Common myeloid progenitor, CD34-positive (primary cell): ENCODE measurements at regions of chr6 and their contacts with region 1.

Region 1: GRCh38 chr6:44431118-44431725 is 43.7 kb downstream of the CDC5L start:
- DNase-seq: peak; percentile 65 to 86 (median 80)
- H3K4me3 ChIP-seq: no peak overlapping the region
- H3K27ac ChIP-seq: no peak overlapping the region
- H3K4me1 ChIP-seq: no peaks in the 10 kb centered on the region
- H3K27me3 ChIP-seq: no peaks in the 10 kb centered on the region

Region 2: DNA sequence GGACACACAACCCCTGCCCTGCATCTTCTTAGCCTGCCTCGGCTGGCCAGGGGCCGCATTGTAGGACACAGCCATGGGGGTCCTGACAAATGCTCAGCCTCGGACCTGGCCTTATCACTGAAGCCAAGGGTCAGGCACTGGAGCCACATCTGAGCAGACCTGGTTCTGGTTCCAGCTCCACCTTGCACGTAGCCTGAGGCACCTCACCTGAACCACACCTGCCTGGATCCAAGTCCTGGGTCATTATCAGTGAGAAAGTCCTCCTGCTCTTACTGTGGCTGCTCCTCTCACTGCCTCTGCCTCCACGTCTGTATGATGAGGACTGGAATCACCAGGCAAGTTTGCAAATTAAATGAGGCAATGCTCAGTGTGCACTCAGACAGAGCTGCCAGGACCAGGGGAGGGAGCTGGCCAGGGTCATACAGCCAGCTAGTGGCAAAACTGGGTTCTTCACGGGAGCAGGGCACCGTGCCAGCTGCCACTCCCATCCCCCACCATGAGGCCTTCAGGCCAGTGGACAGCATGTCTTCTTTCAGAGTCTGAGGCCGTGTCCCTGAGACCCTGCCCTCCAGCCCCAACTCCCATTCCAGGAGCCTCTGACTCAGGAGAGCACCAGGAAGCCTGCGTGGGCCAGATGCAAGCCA is 344.2 kb before region 1 on chr6:
- CTCF ChIA-PET with region 1: no interaction called
- POLR2A ChIA-PET with region 1: no interaction called
- DNase-seq: no peak
- H3K4me3 ChIP-seq: no peak overlapping the region
- H3K27ac ChIP-seq: no peak overlapping the region
- H3K4me1 ChIP-seq: no peaks in the 10 kb centered on the region
- H3K27me3 ChIP-seq: no peaks in the 10 kb centered on the region

Region 3: DNA sequence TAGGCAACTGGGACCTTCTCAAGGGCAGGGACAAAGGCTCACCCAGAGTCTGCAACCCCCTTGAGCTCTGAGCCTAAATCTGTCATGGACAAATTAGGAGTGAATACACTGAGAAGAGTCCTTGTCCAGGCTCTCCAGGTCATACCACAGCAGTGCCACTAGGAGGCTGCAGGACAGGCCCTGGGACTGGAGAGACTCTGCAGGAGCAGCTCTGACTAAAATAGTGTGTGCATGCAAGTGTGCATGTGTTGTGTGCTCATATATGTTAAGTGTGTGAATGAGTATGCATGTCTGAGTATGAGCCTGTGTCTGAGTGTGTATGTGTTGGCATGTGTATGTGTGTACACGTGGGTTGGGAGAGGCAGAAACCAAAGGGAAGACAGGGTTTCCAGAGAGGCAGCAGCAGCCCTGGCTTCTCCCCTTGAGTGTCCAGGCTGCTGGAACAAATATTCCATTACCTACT is 331.1 kb before region 1 on chr6:
- CTCF ChIA-PET with region 1: no interaction called
- POLR2A ChIA-PET with region 1: no interaction called
- DNase-seq: peak; percentile 38 to 54 (median 51)
- H3K4me3 ChIP-seq: no peak overlapping the region
- H3K27ac ChIP-seq: no peak overlapping the region
- H3K4me1 ChIP-seq: peaks cover 0 to 9% (median under 1%) of the 10 kb centered on the region in 4 experiments
- H3K27me3 ChIP-seq: no peaks in the 10 kb centered on the region

Region 4: GRCh38 chr6:44446628-44447306 is 15.5 kb after region 1 on chr6:
- CTCF ChIA-PET with region 1: interaction called, 10 read pairs
- POLR2A ChIA-PET with region 1: no interaction called
- DNase-seq: no peak
- H3K4me3 ChIP-seq: no peak overlapping the region
- H3K27ac ChIP-seq: no peak overlapping the region
- H3K4me1 ChIP-seq: no peaks in the 10 kb centered on the region
- H3K27me3 ChIP-seq: no peaks in the 10 kb centered on the region

Region 5: DNA sequence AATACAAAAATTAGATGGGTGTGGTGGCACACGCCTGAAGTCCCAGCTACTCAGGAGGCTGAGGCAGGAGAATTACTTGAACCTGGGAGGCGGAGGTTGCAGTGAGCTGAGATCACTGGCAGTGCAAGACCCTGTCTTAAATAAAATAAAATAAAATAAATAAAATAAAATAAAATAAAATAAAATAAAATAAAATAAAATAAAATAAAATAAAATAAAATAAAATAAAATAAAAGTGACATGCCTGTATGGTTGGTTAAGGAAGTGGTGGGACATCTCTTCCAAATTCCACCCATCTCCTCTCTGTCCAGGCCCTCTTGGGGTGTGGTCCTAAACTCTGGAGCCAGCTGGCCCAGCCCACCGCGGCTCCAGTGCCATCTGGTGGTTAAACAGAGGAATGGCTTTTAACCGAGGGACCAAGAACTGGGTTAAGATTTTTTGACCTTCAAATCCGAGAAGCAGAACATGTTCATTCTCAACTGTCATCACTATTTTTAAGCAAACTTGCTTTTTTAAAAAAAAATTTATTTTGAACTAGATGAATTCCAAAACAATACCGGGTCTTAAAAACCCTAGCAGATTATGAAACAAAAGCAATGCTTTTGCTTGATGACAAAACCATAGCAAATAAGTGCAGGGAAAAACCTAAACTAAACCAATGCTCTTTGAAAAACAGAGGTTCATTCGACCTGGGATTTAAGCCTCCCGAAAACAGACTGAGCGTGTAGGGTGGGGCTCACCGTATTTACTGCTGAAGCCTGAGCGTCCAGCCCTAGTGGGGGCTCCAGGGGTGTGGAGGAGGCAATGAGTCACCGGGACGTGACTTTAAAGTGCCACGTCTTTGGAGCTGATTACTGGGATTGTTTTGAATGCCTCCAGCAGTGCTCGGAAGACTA is 25.1 kb after region 1 on chr6:
- CTCF ChIA-PET with region 1: interaction called, 164 read pairs
- POLR2A ChIA-PET with region 1: no interaction called
- DNase-seq: peak; percentile 49 to 65 (median 64)
- H3K4me3 ChIP-seq: no peak overlapping the region
- H3K27ac ChIP-seq: no peak overlapping the region
- H3K4me1 ChIP-seq: peaks cover 0 to 1% (median 0%) of the 10 kb centered on the region in 4 experiments
- H3K27me3 ChIP-seq: no peaks in the 10 kb centered on the region

Region 6: DNA sequence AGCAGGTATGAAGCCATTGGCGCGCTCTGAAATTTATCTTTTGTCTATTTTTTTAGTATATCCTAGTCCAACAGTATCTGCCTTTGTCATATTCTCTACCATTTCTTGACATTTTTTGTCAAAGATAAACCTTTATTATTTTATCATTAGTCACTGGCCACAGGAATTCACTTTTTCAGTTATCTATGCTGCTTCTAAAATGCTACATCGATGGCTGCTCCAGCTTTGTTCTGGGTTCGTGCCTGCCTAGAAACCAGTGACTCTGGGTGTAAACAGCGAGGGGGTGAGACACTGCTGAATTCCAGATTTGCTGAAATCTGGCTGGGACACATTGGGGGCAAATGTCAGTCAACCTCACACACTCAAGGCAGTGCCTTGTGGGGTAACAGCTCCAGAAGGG is 149.7 kb after region 1 on chr6:
- CTCF ChIA-PET with region 1: no interaction called
- POLR2A ChIA-PET with region 1: no interaction called
- DNase-seq: no peak
- H3K4me3 ChIP-seq: no peak overlapping the region
- H3K27ac ChIP-seq: no peak overlapping the region
- H3K4me1 ChIP-seq: no peaks in the 10 kb centered on the region
- H3K27me3 ChIP-seq: no peaks in the 10 kb centered on the region